ENCODE measurements at regions of chr10 and their contacts with region 1.

Region 1: GRCh38 chr10:63720072-63720537 is 198.9 kb downstream of the REEP3 start:
- DNase-seq: peak; percentile 74 to 84
- H3K4me3 ChIP-seq: no peak overlapping the region
- H3K4me3 Mint-ChIP-seq: no peak overlapping the region
- H3K27ac Mint-ChIP-seq: peak overlapping the region; percentile 26
- H3K4me1 ChIP-seq: peaks cover 31% of the 10 kb centered on the region
- H3K4me1 Mint-ChIP-seq: peaks cover 23% of the 10 kb centered on the region
- H3K27me3 ChIP-seq: no peaks in the 10 kb centered on the region
- H3K27me3 Mint-ChIP-seq: no peaks in the 10 kb centered on the region
- CTCF ChIP-seq: peak; percentile 99

Region 2: GRCh38 chr10:63166742-63167258 is 553.3 kb before region 1 on chr10:
- CTCF ChIA-PET with region 1: interaction called, 61 read pairs
- POLR2A ChIA-PET with region 1: no interaction called
- intact Hi-C with region 1: loop called (anchors 1 kb)
- DNase-seq: peak in 1 of 2 experiments; percentile 80
- H3K4me3 ChIP-seq: no peak overlapping the region
- H3K4me3 Mint-ChIP-seq: no peak overlapping the region
- H3K27ac Mint-ChIP-seq: no peak overlapping the region
- H3K4me1 ChIP-seq: no peaks in the 10 kb centered on the region
- H3K4me1 Mint-ChIP-seq: peaks cover 6% of the 10 kb centered on the region
- H3K27me3 ChIP-seq: no peaks in the 10 kb centered on the region
- H3K27me3 Mint-ChIP-seq: no peaks in the 10 kb centered on the region
- CTCF ChIP-seq: peak; percentile 92 to 94

Region 3: GRCh38 chr10:63465293-63466143 is 254.6 kb before region 1 on chr10 and contains the start of gene JMJD1C:
- CTCF ChIA-PET with region 1: interaction called, 3 read pairs
- POLR2A ChIA-PET with region 1: no interaction called
- intact Hi-C with region 1: loop called (anchors 5 kb)
- DNase-seq: peak; percentile 89 to 95
- H3K4me3 ChIP-seq: peak within 1 kb of the TSS; percentile 96
- H3K4me3 Mint-ChIP-seq: peak within 1 kb of the TSS; percentile 100
- H3K27ac Mint-ChIP-seq: peak within 1 kb of the TSS; percentile 100
- H3K4me1 ChIP-seq: 0 out of 2 replicates have a peak, but pooled peaks cover 11% of the 10 kb centered on the region
- H3K4me1 Mint-ChIP-seq: peaks cover 44% of the 10 kb centered on the region
- H3K27me3 ChIP-seq: no peaks in the 10 kb centered on the region
- H3K27me3 Mint-ChIP-seq: no peaks in the 10 kb centered on the region
- CTCF ChIP-seq: peak in 1 of 2 experiments; percentile 6
- total RNA-seq, gene JMJD1C: 89.7 and 95.7 TPM in 2 replicates

Region 4: GRCh38 chr10:63738410-63738809 is 18.3 kb after region 1 on chr10:
- CTCF ChIA-PET with region 1: interaction called, 21 read pairs
- POLR2A ChIA-PET with region 1: no interaction called
- intact Hi-C with region 1: loop called (anchors 1 kb)
- DNase-seq: peak; percentile 90 to 95
- H3K4me3 ChIP-seq: no peak overlapping the region
- H3K4me3 Mint-ChIP-seq: peak overlapping the region; percentile 37
- H3K27ac Mint-ChIP-seq: peak overlapping the region; percentile 76
- H3K4me1 ChIP-seq: peaks cover 32% of the 10 kb centered on the region
- H3K4me1 Mint-ChIP-seq: peaks cover 26% of the 10 kb centered on the region
- H3K27me3 ChIP-seq: no peaks in the 10 kb centered on the region
- H3K27me3 Mint-ChIP-seq: no peaks in the 10 kb centered on the region
- CTCF ChIP-seq: no peak

Region 5: DNA sequence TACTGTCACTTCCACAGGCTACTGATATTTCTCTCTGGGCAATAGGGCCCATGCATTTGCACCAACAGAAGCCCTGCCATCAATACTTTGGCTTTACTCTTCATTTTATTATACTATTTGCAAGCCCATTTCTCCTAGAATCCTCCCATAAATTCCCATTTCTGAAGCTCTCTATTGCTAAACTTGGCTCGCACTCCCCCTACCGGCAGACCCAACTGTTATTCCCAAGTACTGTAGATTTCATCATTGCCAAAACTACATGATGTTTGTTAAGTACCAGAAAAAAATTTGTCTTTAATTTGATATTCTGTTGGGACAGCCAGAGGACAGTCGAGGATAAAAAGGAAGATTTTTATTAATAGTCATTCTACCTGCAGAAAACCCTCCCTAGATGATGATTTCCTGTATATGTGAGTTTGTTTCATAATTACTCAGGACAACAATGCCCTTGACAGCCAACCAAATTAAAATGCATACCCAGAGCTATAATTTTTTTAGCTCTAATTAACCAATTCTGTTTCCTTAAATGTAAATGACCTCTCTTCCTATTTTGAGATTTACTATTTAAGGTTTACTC is 99.7 kb after region 1 on chr10:
- CTCF ChIA-PET with region 1: interaction called, 12 read pairs
- POLR2A ChIA-PET with region 1: no interaction called
- intact Hi-C with region 1: loop called (anchors 1 kb)
- DNase-seq: peak; percentile 74 to 84
- H3K4me3 ChIP-seq: no peak overlapping the region
- H3K4me3 Mint-ChIP-seq: no peak overlapping the region
- H3K27ac Mint-ChIP-seq: no peak overlapping the region
- H3K4me1 ChIP-seq: no peaks in the 10 kb centered on the region
- H3K4me1 Mint-ChIP-seq: no peaks in the 10 kb centered on the region
- H3K27me3 ChIP-seq: no peaks in the 10 kb centered on the region
- H3K27me3 Mint-ChIP-seq: peaks cover 7% of the 10 kb centered on the region
- CTCF ChIP-seq: peak; percentile 95 to 98

Region 6: DNA sequence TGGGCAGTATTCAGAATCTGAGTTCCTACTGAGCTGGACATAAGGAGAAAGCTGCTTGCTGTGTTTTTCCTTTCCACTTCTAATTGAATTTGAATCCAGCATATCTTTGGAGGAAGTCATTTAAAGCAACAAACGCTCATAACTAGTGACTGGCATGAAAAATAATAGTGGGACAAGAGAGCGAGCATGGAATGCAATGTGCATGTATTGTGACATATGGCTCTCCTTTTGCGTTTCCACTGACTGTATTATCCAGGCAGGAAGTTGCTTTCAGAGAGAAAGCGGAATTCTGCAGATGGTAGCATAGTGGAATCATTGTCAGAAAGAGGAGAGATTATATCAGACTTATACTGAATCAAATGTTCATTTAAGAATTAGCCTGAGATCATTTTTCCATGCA is 169.7 kb after region 1 on chr10:
- CTCF ChIA-PET with region 1: no interaction called
- POLR2A ChIA-PET with region 1: no interaction called
- intact Hi-C with region 1: no loop called
- DNase-seq: no peak
- H3K4me3 ChIP-seq: no peak overlapping the region
- H3K4me3 Mint-ChIP-seq: no peak overlapping the region
- H3K27ac Mint-ChIP-seq: no peak overlapping the region
- H3K4me1 ChIP-seq: no peaks in the 10 kb centered on the region
- H3K4me1 Mint-ChIP-seq: no peaks in the 10 kb centered on the region
- H3K27me3 ChIP-seq: no peaks in the 10 kb centered on the region
- H3K27me3 Mint-ChIP-seq: peaks cover 17% of the 10 kb centered on the region
- CTCF ChIP-seq: no peak